K562 (cell line): ENCODE measurements at regions of chr9 and their contacts with region 1.

Region 1: DNA sequence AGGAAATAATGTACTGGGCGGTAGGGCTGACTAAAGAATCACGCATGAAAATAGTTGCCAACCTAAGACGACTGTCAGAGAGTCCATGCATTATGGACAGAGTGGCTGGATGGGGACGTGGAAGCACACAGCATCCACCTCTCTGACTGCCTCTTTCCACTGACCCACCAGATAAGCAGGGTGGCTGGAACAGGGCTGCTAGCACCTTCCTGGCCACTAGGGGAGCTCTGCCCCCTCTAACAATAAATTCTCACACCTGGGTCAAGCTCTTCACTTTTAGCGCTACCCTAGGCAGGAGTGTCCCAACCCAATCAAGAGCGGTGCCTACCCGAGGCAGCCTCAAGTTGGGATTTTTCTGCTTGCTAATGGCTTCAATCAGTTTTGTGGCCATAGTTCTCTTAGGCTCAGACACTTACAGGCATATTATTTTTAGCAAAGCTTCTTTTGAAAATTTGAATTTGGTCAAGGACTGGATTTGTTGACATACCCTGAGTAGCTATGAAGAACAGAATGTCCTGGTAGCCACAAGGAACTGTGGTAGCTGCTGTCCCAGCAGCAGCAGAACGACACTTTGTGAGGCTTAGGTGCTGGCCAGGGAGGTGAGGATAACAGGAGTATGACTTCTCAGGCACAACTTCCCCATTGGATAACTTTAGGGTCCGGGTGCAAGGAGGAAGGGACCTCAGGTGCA is 6.9 kb upstream of the TPM2 start:
- DNase-seq: peak; percentile 59 to 70 (median 69)
- ATAC-seq: peak; percentile 96
- H3K4me3 ChIP-seq: no peak overlapping the region
- H3K27ac ChIP-seq: no peak overlapping the region
- H3K4me1 ChIP-seq: no peaks in the 10 kb centered on the region; a peak in 3 of 5 replicates
- H3K27me3 ChIP-seq: no peaks in the 10 kb centered on the region
- CTCF ChIP-seq: peak; percentile 75 to 85 (median 78)
- EP300 ChIP-seq: no peak
- POLR2A ChIP-seq: no peak
- RAD21 ChIP-seq: peak in 1 of 2 experiments; percentile 40; a peak in 2 of 4 replicates

Region 2: GRCh38 chr9:35657546-35658136 is 39.0 kb before region 1 on chr9 and contains the start of gene RMRP:
- CTCF ChIA-PET with region 1: no interaction called
- POLR2A ChIA-PET with region 1: interaction called, 5 read pairs
- in situ Hi-C with region 1: no loop called
- intact Hi-C with region 1: loop called (anchors 5 kb)
- DNase-seq: peak; percentile 80 to 98 (median 86)
- ATAC-seq: peak; percentile 96
- H3K4me3 ChIP-seq: peak within 1 kb of the TSS; percentile 89
- H3K27ac ChIP-seq: peak within 1 kb of the TSS; percentile 98
- H3K4me1 ChIP-seq: peaks cover 14 to 26% of the 10 kb centered on the region in 2 experiments; a peak in 4 of 5 replicates
- H3K27me3 ChIP-seq: no peaks in the 10 kb centered on the region
- CTCF ChIP-seq: peak; percentile 19 to 35 (median 25); a peak in 2 of 6 replicates
- EP300 ChIP-seq: peak; percentile 42; the same call in 1 of the 2 replicates
- POLR2A ChIP-seq: no peak; the same call in 1 of the 2 replicates
- RAD21 ChIP-seq: no peak; a peak in 1 of 4 replicates
- polyA plus RNA-seq, gene RMRP: not detected

Region 3: GRCh38 chr9:35711501-35712428 is 15.1 kb after region 1 on chr9:
- CTCF ChIA-PET with region 1: no interaction called
- POLR2A ChIA-PET with region 1: interaction called, 17 read pairs
- in situ Hi-C with region 1: no loop called
- intact Hi-C with region 1: no loop called
- DNase-seq: no peak
- ATAC-seq: no peak
- H3K4me3 ChIP-seq: no peak overlapping the region
- H3K27ac ChIP-seq: no peak overlapping the region
- H3K4me1 ChIP-seq: no peaks in the 10 kb centered on the region
- H3K27me3 ChIP-seq: no peaks in the 10 kb centered on the region
- CTCF ChIP-seq: no peak
- EP300 ChIP-seq: no peak
- POLR2A ChIP-seq: no peak
- RAD21 ChIP-seq: no peak